ENCODE measurements at regions of chr19 and their contacts with region 1.

Region 1: DNA sequence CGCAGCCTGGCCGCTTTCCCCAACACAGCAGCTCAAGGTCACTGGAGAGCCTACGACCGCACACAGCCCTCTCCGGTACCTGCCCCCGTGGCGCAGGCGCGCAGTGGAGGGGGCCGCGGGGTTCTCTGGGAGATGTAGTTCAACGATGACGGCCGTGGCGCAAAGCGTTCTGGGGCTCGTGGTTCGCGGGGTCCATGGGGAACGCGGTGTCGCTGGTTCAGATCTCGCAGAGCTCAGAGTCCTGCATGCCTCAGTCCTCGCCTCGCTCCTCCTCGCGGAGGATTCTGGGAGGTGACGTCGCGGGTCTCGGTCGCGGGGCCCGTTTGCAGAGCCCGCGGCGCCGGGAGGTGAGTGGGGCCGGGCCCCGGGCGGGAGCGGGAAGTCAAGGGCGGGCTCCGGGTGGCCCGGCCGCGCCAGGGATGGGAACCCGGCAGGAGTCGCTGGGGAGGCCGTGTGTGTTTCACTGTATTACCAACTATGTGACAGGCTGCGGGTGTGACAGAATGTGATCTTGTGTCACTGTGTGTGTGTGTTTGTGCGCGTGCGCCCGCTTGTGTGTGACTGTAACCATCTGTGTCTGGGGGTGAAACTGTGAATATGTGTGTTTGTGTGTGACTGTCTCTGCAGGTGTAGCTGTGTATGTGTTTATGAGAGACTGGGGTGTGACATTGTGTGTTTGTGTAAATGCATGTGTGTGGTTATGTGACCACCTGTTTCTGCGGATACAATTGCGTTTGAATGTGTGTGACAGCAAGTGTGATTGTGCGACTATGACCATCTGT is at the start of gene ZNF527:
- DNase-seq: peak; percentile 96
- ATAC-seq: peak; percentile 98
- H3K4me3 Mint-ChIP-seq: peak within 1 kb of the TSS; percentile 99
- H3K27ac Mint-ChIP-seq: peak within 1 kb of the TSS; percentile 98
- H3K4me1 Mint-ChIP-seq: peaks cover 14% of the 10 kb centered on the region
- H3K27me3 Mint-ChIP-seq: no peaks in the 10 kb centered on the region
- CTCF ChIP-seq: no peak
- total RNA-seq, gene ZNF527: 6.3 and 8.1 TPM in 2 replicates

Region 2: DNA sequence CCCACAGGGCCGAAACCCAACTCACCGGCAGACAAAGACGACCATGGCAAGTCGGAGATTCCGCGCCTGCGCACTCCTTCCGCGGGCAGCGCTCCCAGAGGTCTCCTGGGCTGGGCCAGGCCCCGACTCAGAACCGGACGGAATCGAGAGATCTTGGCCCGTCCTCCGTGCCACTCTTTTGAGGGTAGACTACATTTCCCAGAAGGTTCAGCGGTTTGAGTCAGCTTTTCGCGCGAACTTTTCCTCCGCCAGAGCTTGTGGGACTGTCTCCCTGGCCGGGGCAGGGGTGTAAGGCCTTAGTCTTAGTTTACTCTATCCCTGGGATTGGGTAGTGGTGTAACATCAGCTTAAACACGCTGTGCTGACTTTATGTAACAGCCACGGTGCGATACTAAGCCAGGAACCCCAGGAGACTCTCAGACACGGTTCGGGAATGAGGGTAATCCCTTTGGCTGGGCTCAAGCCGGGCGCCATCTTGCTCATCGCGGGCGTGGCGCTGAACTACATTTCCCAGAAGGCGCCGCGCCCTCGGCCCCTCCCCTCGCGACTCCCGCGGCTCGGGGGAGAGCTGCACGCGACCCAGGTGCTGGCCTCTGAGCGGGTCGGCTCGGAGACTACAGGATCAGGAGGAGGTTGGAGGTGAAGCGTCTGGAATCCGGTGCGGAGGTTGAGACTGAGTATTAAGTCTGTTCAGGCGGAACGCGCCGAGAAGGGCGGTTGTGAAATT is 842.7 kb before region 1 on chr19 and contains the start of gene ZNF260:
- CTCF ChIA-PET with region 1: no interaction called
- POLR2A ChIA-PET with region 1: no interaction called
- intact Hi-C with region 1: loop called (anchors 1 kb)
- DNase-seq: peak; percentile 94
- ATAC-seq: peak; percentile 89
- H3K4me3 Mint-ChIP-seq: peak within 1 kb of the TSS; percentile 99
- H3K27ac Mint-ChIP-seq: peak within 1 kb of the TSS; percentile 99
- H3K4me1 Mint-ChIP-seq: peaks cover 27% of the 10 kb centered on the region
- H3K27me3 Mint-ChIP-seq: no peaks in the 10 kb centered on the region
- CTCF ChIP-seq: no peak
- total RNA-seq, gene ZNF260: 9.8 and 13.6 TPM in 2 replicates

Region 3: DNA sequence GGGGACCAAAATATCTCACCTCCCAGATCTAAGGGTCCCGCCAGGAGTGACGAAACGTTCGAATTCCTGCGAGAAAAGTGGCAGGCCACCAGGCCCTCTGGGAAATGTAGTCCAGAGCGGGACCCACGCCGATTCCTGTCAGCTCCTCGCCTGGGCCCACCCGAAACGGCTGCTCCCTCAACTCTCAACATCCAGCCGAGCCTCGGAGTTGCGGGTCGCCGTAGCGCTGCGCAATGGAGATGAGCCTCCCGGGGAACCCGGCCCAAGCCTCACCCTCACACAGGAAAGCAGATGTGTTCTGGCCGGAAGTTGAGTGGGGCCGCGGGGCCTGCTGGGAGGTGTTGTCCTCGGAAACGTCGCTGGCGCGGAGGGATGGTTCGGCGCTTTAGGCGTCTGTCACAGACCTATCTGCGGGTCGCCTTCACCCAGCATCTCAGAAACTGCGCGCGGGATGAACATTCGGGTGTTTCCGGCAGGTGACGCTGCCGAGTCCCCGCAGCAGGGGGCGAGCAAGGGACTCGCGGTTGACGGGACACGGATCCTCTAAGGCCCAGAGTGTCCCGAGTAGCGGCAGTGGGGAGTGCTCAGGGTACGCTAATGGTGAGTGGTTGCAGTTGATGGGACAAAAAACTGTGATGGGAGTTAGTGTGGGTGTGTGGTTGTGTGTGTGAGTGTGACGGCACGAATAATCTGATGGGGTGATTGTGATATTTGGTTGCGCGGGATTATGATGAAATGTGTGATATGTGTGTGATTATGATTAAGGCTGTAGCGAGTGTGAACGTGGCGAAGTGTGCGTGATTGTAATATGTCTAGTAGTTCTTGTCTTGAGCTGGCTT is 454.9 kb before region 1 on chr19 and contains the starts of genes ZNF568 and ZNF829:
- CTCF ChIA-PET with region 1: no interaction called
- POLR2A ChIA-PET with region 1: no interaction called
- intact Hi-C with region 1: loop called (anchors 1 kb)
- DNase-seq: peak; percentile 87
- ATAC-seq: peak; percentile 93
- H3K4me3 Mint-ChIP-seq: peak within 1 kb of the TSS; percentile 91
- H3K27ac Mint-ChIP-seq: peak within 1 kb of the TSS; percentile 91
- H3K4me1 Mint-ChIP-seq: peaks cover 26% of the 10 kb centered on the region
- H3K27me3 Mint-ChIP-seq: no peaks in the 10 kb centered on the region
- CTCF ChIP-seq: no peak
- total RNA-seq, gene ZNF568: 12.0 and 13.4 TPM in 2 replicates
- total RNA-seq, gene ZNF829: 7.3 and 7.6 TPM in 2 replicates

Region 4: DNA sequence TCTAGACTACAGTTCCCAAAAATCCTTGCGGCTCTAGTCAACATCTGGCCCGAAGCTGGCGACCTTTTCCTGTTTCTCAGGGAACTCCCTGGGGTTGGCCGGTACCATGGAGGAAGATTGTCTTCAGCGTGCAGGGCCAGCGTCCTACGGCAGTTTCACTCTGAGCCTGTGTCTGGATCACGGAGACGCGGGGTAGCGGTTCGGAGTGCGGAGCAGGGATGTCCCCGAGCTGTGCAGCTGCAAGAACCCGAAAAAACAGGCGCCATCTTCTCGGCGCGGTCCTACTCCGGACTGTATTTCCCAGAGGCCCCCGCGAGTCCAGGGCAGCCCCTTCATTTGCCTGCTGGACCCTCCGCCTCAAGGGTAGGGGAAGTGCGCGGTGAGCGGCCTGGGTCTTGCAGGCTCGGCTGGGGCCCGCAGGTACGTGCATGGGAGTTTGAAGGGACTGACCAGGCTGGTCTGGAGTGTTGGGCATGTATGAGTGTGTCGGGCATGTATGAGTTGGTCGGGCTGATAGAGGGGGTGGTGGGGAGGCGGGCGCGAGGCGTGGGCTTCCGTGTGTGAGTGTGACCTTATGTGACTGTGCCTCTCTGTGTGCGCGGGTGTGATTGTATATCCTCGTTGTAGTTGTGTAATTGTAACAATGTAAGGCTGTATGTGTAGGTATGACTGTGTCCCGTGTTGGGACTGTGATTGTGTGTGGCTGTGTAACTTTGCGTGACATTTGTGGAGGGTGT is 153.0 kb before region 1 on chr19 and contains the start of gene ZNF383:
- CTCF ChIA-PET with region 1: no interaction called
- POLR2A ChIA-PET with region 1: interaction called, 3 read pairs
- intact Hi-C with region 1: loop called (anchors 1 kb)
- DNase-seq: peak; percentile 81
- ATAC-seq: peak; percentile 89
- H3K4me3 Mint-ChIP-seq: peak within 1 kb of the TSS; percentile 98
- H3K27ac Mint-ChIP-seq: peak within 1 kb of the TSS; percentile 99
- H3K4me1 Mint-ChIP-seq: peaks cover 26% of the 10 kb centered on the region
- H3K27me3 Mint-ChIP-seq: no peaks in the 10 kb centered on the region
- CTCF ChIP-seq: no peak
- total RNA-seq, gene ZNF383: 19.9 and 25.5 TPM in 2 replicates

Region 5: DNA sequence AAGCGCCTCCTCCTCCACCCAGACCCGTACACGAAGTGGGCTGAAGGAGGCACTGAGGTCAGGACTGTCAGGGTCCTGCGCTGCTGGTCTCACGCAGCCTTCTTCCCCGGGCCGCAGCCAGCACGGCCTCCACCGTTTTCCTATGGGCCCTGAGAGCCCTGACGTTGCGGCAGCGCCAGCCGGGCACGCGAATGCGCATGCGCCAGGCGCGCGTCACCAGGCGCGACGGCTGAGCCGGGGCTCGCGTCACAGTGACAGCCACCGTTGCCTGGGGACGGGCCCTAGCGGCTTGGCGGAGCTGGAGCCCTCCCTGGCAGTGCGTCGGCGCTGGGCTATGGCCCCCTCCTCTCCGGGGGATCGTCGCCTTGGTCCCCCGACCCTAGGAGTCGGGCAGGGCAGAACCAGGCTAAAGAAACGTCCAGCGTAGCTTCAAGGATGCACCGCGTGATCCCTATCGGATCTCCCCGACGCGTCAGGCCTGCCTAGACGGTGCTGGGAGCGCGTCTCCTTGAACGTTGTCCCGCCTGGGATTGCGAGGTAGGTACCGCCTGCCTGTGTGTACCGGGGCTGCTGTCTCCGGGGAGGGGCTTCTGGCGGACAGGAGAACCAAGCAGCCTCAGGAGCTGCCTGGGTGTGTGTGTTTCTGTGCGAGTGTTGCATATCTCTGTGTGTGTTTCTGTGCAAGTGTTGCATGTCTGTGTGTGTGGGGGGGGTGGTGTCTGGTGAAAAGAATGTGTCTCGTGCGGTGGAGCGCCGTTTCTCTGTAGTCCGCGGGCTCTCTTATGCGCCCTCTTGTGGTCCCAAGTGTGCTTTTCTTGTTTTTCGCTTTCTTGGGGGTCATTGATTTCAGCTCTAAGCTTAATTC is 180.3 kb after region 1 on chr19:
- CTCF ChIA-PET with region 1: no interaction called
- POLR2A ChIA-PET with region 1: interaction called, 8 read pairs
- intact Hi-C with region 1: loop called (anchors 1 kb)
- DNase-seq: peak; percentile 70
- ATAC-seq: peak; percentile 85
- H3K4me3 Mint-ChIP-seq: peak overlapping the region; percentile 93
- H3K27ac Mint-ChIP-seq: peak overlapping the region; percentile 91
- H3K4me1 Mint-ChIP-seq: peaks cover 12% of the 10 kb centered on the region
- H3K27me3 Mint-ChIP-seq: no peaks in the 10 kb centered on the region
- CTCF ChIP-seq: no peak

Region 6: GRCh38 chr19:37691881-37692504 is 320.9 kb after region 1 on chr19:
- CTCF ChIA-PET with region 1: no interaction called
- POLR2A ChIA-PET with region 1: no interaction called
- intact Hi-C with region 1: loop called (anchors 2 kb)
- DNase-seq: peak; percentile 69
- ATAC-seq: peak; percentile 94
- H3K4me3 Mint-ChIP-seq: peak overlapping the region; percentile 94
- H3K27ac Mint-ChIP-seq: peak overlapping the region; percentile 86
- H3K4me1 Mint-ChIP-seq: peaks cover 10% of the 10 kb centered on the region
- H3K27me3 Mint-ChIP-seq: no peaks in the 10 kb centered on the region
- CTCF ChIP-seq: no peak

Measured in activated B cell treated with CpG ODN at 0.5 μM for 24 hours (primary cell).